ENCODE measurements at regions of chr6 and their contacts with region 1.

Region 1: GRCh38 chr6:116633685-116634084 is 17.4 kb downstream of the RSPH4A start:
- DNase-seq: peak; percentile 13 to 36
- ATAC-seq: peak; percentile 74 to 75; a peak in 3 of 6 replicates
- H3K4me3 ChIP-seq: no peak overlapping the region
- H3K27ac ChIP-seq: no peak overlapping the region
- H3K4me1 ChIP-seq: no peaks in the 10 kb centered on the region
- CTCF ChIP-seq: no peak
- EP300 ChIP-seq: no peak
- POLR2A ChIP-seq: no peak
- RAD21 ChIP-seq: 0 out of 5 replicates have a peak, but pooled peaks of 1 of the 2 experiments have one; percentile 2

Region 2: GRCh38 chr6:116570856-116571682 is 62.6 kb before region 1 on chr6 and contains the start of gene RWDD1:
- CTCF ChIA-PET with region 1: no interaction called
- POLR2A ChIA-PET with region 1: no interaction called
- DNase-seq: peak; percentile 87 to 99
- ATAC-seq: peak; percentile 98 to 99
- H3K4me3 ChIP-seq: peak within 1 kb of the TSS; percentile 89
- H3K27ac ChIP-seq: peak within 1 kb of the TSS; percentile 90 to 96
- H3K4me1 ChIP-seq: peaks cover 19% of the 10 kb centered on the region; the same call in 2 of the 3 replicates
- CTCF ChIP-seq: no peak
- EP300 ChIP-seq: no peak
- POLR2A ChIP-seq: peak; percentile 76
- RAD21 ChIP-seq: no peak
- polyA plus RNA-seq, gene RWDD1: 33.2 and 47.7 TPM in 2 replicates

Region 3: DNA sequence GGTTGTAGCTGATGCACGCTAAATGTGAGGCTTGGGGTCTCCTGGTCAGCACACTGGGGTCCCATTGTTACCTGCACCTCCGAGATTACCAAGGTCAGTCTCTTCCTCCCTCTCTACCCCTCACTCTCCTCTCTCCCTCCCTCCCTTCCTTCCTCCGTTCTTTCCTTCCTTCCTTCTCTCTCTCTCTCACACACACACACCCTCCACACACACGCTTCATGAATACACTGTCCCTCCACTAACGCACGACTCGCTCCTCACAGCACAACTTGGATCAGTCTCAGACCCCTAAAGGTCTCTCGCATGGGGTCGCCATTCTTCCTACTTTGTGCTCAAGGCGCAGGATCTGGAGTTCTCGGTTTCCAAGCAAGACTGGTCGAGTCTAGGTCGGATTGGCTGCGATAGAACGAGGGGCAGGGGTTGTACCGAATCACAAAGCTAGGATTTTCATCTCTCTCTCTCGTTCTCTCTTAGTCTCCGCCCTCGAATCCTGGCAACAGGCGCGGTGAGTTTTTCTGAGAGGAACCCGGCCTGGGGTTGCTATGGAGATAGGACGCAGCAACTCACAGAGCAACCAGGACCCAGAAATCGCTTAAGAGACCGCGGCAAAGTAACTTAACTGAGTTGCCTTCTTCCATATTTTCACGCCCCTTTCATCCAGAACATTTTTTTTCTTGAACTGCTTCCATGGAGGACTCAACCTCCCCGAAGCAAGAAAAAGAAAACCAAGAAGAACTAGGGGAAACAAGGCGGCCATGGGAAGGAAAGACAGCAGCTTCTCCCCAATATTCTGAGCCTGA is 17.5 kb before region 1 on chr6 and contains the start of gene RSPH4A:
- CTCF ChIA-PET with region 1: interaction called, 14 read pairs
- POLR2A ChIA-PET with region 1: no interaction called
- DNase-seq: peak; percentile 82 to 89
- ATAC-seq: peak; percentile 99 to 100
- H3K4me3 ChIP-seq: peak within 1 kb of the TSS; percentile 59
- H3K27ac ChIP-seq: peak within 1 kb of the TSS; percentile 58 to 84
- H3K4me1 ChIP-seq: no peaks in the 10 kb centered on the region
- CTCF ChIP-seq: no peak; the same call in 2 of the 3 replicates
- EP300 ChIP-seq: no peak
- POLR2A ChIP-seq: peak; percentile 64
- RAD21 ChIP-seq: 0 out of 5 replicates have a peak, but pooled peaks of 1 of the 2 experiments have one; percentile 10
- polyA plus RNA-seq, gene RSPH4A: 0.17 and 0.28 TPM in 2 replicates

Measured in A549 (cell line).